ENCODE measurements at regions of chr11 and their contacts with region 1.

Region 1: GRCh38 chr11:783581-784015 is 6.3 kb downstream of the CEND1 start:
- DNase-seq: peak; percentile 93 to 94
- H3K4me3 ChIP-seq: peak overlapping the region in 1 of 4 experiments; percentile 31; a peak in 1 of 8 replicates
- H3K27ac ChIP-seq: no peak overlapping the region
- H3K4me1 ChIP-seq: peaks cover 0 to 22% (median 13%) of the 10 kb centered on the region in 4 experiments; a peak in 5 of 7 replicates
- H3K27me3 ChIP-seq: no peaks in the 10 kb centered on the region; a peak in 1 of 7 replicates
- CTCF ChIP-seq: peak in 2 of 3 experiments; percentile 85 to 97; a peak in 3 of 4 replicates
- EP300 ChIP-seq: peak in 1 of 2 experiments; percentile 24; a peak in 1 of 3 replicates
- POLR2A ChIP-seq: peak in 1 of 2 experiments; percentile 53; a peak in 2 of 3 replicates
- RAD21 ChIP-seq: peak; percentile 68 to 71

Region 2: DNA sequence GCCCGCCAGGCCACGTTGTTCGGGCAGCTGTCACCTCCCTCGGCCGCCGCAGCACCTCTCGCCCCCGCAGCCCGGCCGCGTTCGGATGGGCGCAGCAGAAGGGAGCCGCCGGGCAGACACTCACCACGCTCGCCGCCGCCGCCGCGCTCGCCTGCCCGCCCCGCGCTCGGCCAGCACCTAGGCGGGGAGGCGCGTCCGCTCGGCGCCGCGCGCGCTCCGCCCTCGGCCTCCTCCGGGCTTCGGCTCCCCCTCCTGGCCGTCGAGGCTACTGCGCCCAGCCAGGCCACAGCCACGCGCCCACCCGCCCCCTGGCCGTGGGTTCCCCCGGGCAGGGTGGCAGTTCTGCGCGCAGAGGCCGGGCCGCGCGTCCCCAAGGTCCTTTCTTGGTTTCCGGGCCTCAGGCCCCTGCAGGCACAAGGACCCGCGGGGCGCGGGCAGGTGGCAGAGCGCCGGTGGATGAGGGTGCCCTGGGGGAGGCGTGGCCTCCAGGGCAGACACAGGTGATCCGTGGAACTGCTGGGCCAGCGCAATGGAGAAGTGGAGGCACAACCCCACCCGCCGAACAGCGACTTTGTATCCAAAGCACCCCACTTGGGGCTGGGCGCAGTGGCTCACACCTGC is 14.6 kb after region 1 on chr11 and contains the start of gene SLC25A22:
- CTCF ChIA-PET with region 1: interaction called, 14 read pairs
- POLR2A ChIA-PET with region 1: interaction called, 34 read pairs
- DNase-seq: peak in 1 of 2 experiments; percentile 93
- H3K4me3 ChIP-seq: peak within 1 kb of the TSS; percentile 65 to 85 (median 81)
- H3K27ac ChIP-seq: no peak within 1 kb of the TSS; the same call in 1 of the 2 replicates
- H3K4me1 ChIP-seq: peaks cover 4 to 20% (median 15%) of the 10 kb centered on the region in 4 experiments
- H3K27me3 ChIP-seq: no peaks in the 10 kb centered on the region
- CTCF ChIP-seq: peak in 2 of 3 experiments; percentile 76 to 87; a peak in 3 of 4 replicates
- EP300 ChIP-seq: no peak
- POLR2A ChIP-seq: peak in 1 of 2 experiments; percentile 28; a peak in 1 of 3 replicates
- RAD21 ChIP-seq: peak; percentile 32 to 68; a peak in 3 of 4 replicates
- total RNA-seq, gene SLC25A22: 48.0 and 54.3 TPM in 2 replicates

Region 3: DNA sequence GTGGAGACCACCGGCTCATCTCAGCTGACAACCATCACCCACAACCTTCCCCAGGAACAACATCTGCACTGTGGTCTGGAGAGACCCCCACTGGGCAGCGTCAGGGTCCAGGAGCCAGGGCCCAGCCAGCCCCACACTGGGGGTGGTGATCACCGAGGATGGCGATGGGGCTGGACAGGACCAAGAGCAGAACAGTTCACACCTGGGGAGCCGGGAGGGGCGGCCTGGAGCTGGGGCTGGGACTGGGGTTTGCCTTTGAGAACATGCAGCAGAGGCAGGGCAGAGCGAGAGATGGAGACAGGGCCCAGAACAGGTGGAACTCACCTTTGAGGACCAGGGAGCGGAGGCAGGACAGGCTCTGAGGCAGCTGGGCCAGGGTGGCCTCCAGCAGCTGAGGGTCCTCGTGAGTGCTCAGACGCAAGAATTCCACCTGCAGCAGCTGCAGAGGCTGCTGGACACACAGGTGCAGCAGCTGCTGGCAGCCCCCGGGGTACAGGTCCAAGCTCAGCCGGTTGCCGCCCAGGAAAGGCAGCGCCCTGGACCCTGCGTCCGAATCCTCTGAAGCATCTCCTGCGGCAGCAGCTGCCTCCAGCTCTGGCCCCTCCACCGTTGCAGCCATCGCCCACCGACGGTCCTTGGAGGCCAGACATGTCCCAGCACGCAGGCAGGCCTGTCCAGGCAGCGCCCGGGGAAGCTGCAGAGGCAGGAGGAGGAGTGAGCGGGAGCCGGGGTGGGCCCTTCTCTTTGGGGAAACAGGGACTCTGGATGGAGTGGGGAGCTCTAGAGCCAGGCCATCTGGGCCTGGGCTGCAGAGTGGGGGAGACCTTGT is 20.4 kb after region 1 on chr11:
- CTCF ChIA-PET with region 1: interaction called, 4 read pairs
- POLR2A ChIA-PET with region 1: interaction called, 34 read pairs
- DNase-seq: no peak
- H3K4me3 ChIP-seq: peak overlapping the region; percentile 28 to 71 (median 47); a peak in 7 of 8 replicates
- H3K27ac ChIP-seq: no peak overlapping the region
- H3K4me1 ChIP-seq: peaks cover 0 to 8% (median 7%) of the 10 kb centered on the region in 4 experiments; a peak in 5 of 7 replicates
- H3K27me3 ChIP-seq: no peaks in the 10 kb centered on the region; a peak in 1 of 7 replicates
- CTCF ChIP-seq: no peak
- EP300 ChIP-seq: no peak
- POLR2A ChIP-seq: no peak
- RAD21 ChIP-seq: no peak

Region 4: GRCh38 chr11:809287-810039 is 25.9 kb after region 1 on chr11 and contains the start of gene RPLP2:
- CTCF ChIA-PET with region 1: no interaction called
- POLR2A ChIA-PET with region 1: interaction called, 1,917 read pairs
- DNase-seq: peak; percentile 80 to 100
- H3K4me3 ChIP-seq: peak within 1 kb of the TSS; percentile 66 to 100 (median 90)
- H3K27ac ChIP-seq: peak within 1 kb of the TSS; percentile 99
- H3K4me1 ChIP-seq: peaks cover 0 to 10% (median 3%) of the 10 kb centered on the region in 4 experiments; a peak in 4 of 7 replicates
- H3K27me3 ChIP-seq: no peaks in the 10 kb centered on the region
- CTCF ChIP-seq: no peak
- EP300 ChIP-seq: no peak; a peak in 1 of 3 replicates
- POLR2A ChIP-seq: peak in 1 of 2 experiments; percentile 90; a peak in 2 of 3 replicates
- RAD21 ChIP-seq: no peak
- total RNA-seq, gene RPLP2: 2,084 and 2,106 TPM in 2 replicates